ENCODE measurements at regions of chr2 and their contacts with region 1.

Region 1: GRCh38 chr2:128154225-128154624 is 63.2 kb downstream of the UGGT1 start:
- DNase-seq: no peak
- ATAC-seq: no peak
- H3K4me3 Mint-ChIP-seq: no peak overlapping the region
- H3K27ac Mint-ChIP-seq: no peak overlapping the region
- H3K4me1 Mint-ChIP-seq: peaks cover 5% of the 10 kb centered on the region
- H3K27me3 Mint-ChIP-seq: no peaks in the 10 kb centered on the region
- CTCF ChIP-seq: no peak

Region 2: DNA sequence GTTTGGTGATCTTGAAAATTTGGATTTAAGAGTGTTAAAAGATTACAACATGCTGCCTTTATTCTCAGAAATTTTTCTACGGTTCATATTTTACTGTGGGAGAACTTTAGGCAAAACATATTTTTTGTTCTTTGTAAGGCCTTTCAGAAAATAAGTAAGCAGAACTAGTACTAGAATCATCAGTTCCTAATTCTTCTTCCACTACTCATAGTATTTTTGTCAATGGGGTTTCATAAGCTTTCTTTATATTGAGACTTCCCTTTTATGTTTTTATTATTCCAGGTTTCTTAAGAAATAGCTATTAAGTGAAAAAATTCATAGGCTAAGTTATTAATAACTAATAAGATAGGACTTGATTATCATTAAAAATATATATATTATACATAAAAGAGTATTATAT is 50.8 kb before region 1 on chr2:
- CTCF ChIA-PET with region 1: no interaction called
- POLR2A ChIA-PET with region 1: no interaction called
- intact Hi-C with region 1: loop called (anchors 10 kb)
- DNase-seq: no peak
- ATAC-seq: no peak
- H3K4me3 Mint-ChIP-seq: no peak overlapping the region
- H3K27ac Mint-ChIP-seq: no peak overlapping the region
- H3K4me1 Mint-ChIP-seq: peaks cover 16% of the 10 kb centered on the region
- H3K27me3 Mint-ChIP-seq: no peaks in the 10 kb centered on the region
- CTCF ChIP-seq: no peak

Region 3: GRCh38 chr2:128172191-128172590 is 18.0 kb after region 1 on chr2:
- CTCF ChIA-PET with region 1: no interaction called
- POLR2A ChIA-PET with region 1: no interaction called
- intact Hi-C with region 1: no loop called
- DNase-seq: no peak
- ATAC-seq: no peak
- H3K4me3 Mint-ChIP-seq: no peak overlapping the region
- H3K27ac Mint-ChIP-seq: no peak overlapping the region
- H3K4me1 Mint-ChIP-seq: peaks cover 5% of the 10 kb centered on the region
- H3K27me3 Mint-ChIP-seq: no peaks in the 10 kb centered on the region
- CTCF ChIP-seq: no peak